B cell (primary cell): ENCODE measurements at regions of chr10 and their contacts with region 1.

Region 1: GRCh38 chr10:110803830-110804338 is 67.8 kb upstream of the PDCD4 start:
- DNase-seq: peak; percentile 71
- ATAC-seq: peak; percentile 63
- H3K4me3 ChIP-seq: peak overlapping the region in 1 of 5 experiments; percentile 28
- H3K4me3 Mint-ChIP-seq: peak overlapping the region; percentile 77
- H3K27ac ChIP-seq: peak overlapping the region in 1 of 2 donors; percentile 23
- H3K27ac Mint-ChIP-seq: peak overlapping the region; percentile 81
- H3K4me1 ChIP-seq: peaks cover 24 to 30% of the 10 kb centered on the region in 2 donors
- H3K4me1 Mint-ChIP-seq: peaks cover 30% of the 10 kb centered on the region
- H3K27me3 ChIP-seq: no peaks in the 10 kb centered on the region
- H3K27me3 Mint-ChIP-seq: peaks cover 8% of the 10 kb centered on the region
- CTCF ChIP-seq: peak; percentile 73

Region 2: DNA sequence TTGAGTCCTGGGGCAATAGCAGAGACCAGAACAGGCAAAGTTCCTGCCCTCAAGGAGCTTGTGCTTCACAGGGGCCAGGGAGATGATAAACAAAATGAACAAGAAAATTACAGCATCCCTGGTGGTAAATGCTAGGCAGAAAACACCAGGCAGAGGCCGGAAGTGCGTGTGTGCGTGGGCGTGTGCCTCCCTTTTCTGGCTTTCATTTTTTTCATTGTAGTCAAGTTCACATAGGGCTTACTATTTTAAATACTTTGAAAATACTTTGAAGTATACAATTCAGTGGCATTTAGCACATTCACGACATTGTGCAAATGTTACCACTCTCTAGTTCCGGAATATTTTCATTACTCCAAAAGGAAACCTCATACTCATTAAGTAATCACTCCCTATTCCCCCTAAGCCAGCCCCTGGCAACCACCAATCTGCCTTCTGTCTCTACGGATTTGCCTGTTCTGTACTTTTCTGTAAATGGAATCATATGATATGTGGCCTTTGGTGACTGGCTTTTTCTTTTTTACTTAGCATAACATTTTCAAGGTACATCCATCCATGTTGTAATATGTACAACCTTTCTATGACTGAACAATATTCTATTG is 20.3 kb before region 1 on chr10:
- CTCF ChIA-PET with region 1: no interaction called
- POLR2A ChIA-PET with region 1: no interaction called
- intact Hi-C with region 1: no loop called
- DNase-seq: no peak
- ATAC-seq: no peak
- H3K4me3 ChIP-seq: no peak overlapping the region
- H3K4me3 Mint-ChIP-seq: no peak overlapping the region
- H3K27ac ChIP-seq: no peak overlapping the region
- H3K27ac Mint-ChIP-seq: no peak overlapping the region
- H3K4me1 ChIP-seq: no peaks in the 10 kb centered on the region
- H3K4me1 Mint-ChIP-seq: no peaks in the 10 kb centered on the region
- H3K27me3 ChIP-seq: peaks cover 0 to 3% (median 2%) of the 10 kb centered on the region in 4 experiments
- H3K27me3 Mint-ChIP-seq: peaks cover 9% of the 10 kb centered on the region
- CTCF ChIP-seq: no peak

Region 3: GRCh38 chr10:110834629-110835301 is 30.9 kb after region 1 on chr10:
- CTCF ChIA-PET with region 1: interaction called, 13 read pairs
- POLR2A ChIA-PET with region 1: no interaction called
- intact Hi-C with region 1: no loop called
- DNase-seq: no peak
- ATAC-seq: peak; percentile 14
- H3K4me3 ChIP-seq: no peak overlapping the region
- H3K4me3 Mint-ChIP-seq: no peak overlapping the region
- H3K27ac ChIP-seq: no peak overlapping the region
- H3K27ac Mint-ChIP-seq: no peak overlapping the region
- H3K4me1 ChIP-seq: peaks cover 15 to 29% of the 10 kb centered on the region in 2 donors
- H3K4me1 Mint-ChIP-seq: peaks cover 33% of the 10 kb centered on the region
- H3K27me3 ChIP-seq: no peaks in the 10 kb centered on the region
- H3K27me3 Mint-ChIP-seq: no peaks in the 10 kb centered on the region
- CTCF ChIP-seq: no peak

Region 4: GRCh38 chr10:110857265-110858158 is 53.6 kb after region 1 on chr10:
- CTCF ChIA-PET with region 1: interaction called, 11 read pairs
- POLR2A ChIA-PET with region 1: interaction called, 4 read pairs
- intact Hi-C with region 1: no loop called
- DNase-seq: no peak
- ATAC-seq: peak; percentile 26
- H3K4me3 ChIP-seq: no peak overlapping the region
- H3K4me3 Mint-ChIP-seq: peak overlapping the region; percentile 20
- H3K27ac ChIP-seq: peak overlapping the region in 1 of 2 donors; percentile 39
- H3K27ac Mint-ChIP-seq: peak overlapping the region; percentile 33
- H3K4me1 ChIP-seq: peaks cover 61% of the 10 kb centered on the region in 2 donors
- H3K4me1 Mint-ChIP-seq: peaks cover 64% of the 10 kb centered on the region
- H3K27me3 ChIP-seq: no peaks in the 10 kb centered on the region
- H3K27me3 Mint-ChIP-seq: no peaks in the 10 kb centered on the region
- CTCF ChIP-seq: no peak

Region 5: GRCh38 chr10:110871298-110872084 is 67.6 kb after region 1 on chr10 and contains the start of gene PDCD4:
- CTCF ChIA-PET with region 1: interaction called, 93 read pairs
- POLR2A ChIA-PET with region 1: interaction called, 5 read pairs
- intact Hi-C with region 1: loop called (anchors 1 kb)
- DNase-seq: peak; percentile 92
- ATAC-seq: peak; percentile 74
- H3K4me3 ChIP-seq: peak within 1 kb of the TSS; percentile 82 to 94 (median 85)
- H3K4me3 Mint-ChIP-seq: peak within 1 kb of the TSS; percentile 91
- H3K27ac ChIP-seq: peak within 1 kb of the TSS; percentile 89 to 94
- H3K27ac Mint-ChIP-seq: peak within 1 kb of the TSS; percentile 96
- H3K4me1 ChIP-seq: peaks cover 61% of the 10 kb centered on the region in 2 donors
- H3K4me1 Mint-ChIP-seq: peaks cover 60% of the 10 kb centered on the region
- H3K27me3 ChIP-seq: no peaks in the 10 kb centered on the region
- H3K27me3 Mint-ChIP-seq: no peaks in the 10 kb centered on the region
- CTCF ChIP-seq: no peak
- total RNA-seq, gene PDCD4: 169 and 185 TPM in 2 replicates

Region 6: DNA sequence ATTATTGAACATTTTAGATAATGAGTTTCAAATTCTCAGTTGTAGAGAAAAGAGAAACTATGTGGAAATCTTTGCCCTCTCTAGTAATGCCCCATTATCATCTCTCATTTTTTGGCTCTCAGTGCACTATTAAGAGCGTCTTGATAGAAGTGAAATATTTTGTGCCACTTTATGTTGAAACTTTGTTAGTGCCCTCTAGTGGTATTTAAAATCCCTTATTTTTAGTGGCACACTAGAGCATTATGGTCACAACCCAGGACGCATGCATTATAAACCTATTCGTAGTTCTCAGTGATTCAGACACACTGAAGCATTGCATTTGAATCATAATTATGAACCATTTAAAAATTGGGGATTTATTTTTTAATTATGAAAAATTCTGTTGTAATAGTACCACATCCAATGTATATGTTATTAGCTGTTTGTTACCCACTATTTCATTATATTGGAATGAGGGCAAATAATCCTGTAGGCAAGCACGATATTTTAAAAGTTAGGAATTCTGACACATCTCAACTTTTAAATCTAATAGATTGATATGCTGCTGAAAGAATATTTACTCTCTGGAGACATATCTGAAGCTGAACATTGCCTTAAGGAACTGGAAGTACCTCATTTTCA is 89.8 kb after region 1 on chr10:
- CTCF ChIA-PET with region 1: interaction called, 169 read pairs
- POLR2A ChIA-PET with region 1: interaction called, 4 read pairs
- intact Hi-C with region 1: loop called (anchors 1 kb)
- DNase-seq: peak; percentile 74
- ATAC-seq: peak; percentile 79
- H3K4me3 ChIP-seq: no peak overlapping the region
- H3K4me3 Mint-ChIP-seq: no peak overlapping the region
- H3K27ac ChIP-seq: peak overlapping the region in 1 of 2 donors; percentile 21
- H3K27ac Mint-ChIP-seq: no peak overlapping the region
- H3K4me1 ChIP-seq: peaks cover 0 to 7% of the 10 kb centered on the region in 2 donors
- H3K4me1 Mint-ChIP-seq: peaks cover 24% of the 10 kb centered on the region
- H3K27me3 ChIP-seq: no peaks in the 10 kb centered on the region
- H3K27me3 Mint-ChIP-seq: no peaks in the 10 kb centered on the region
- CTCF ChIP-seq: peak; percentile 79

Region 7: GRCh38 chr10:110918643-110919363 is 114.9 kb after region 1 on chr10 and contains the start of gene BBIP1:
- CTCF ChIA-PET with region 1: interaction called, 15 read pairs
- POLR2A ChIA-PET with region 1: interaction called, 3 read pairs
- intact Hi-C with region 1: no loop called
- DNase-seq: peak; percentile 99
- ATAC-seq: peak; percentile 85
- H3K4me3 ChIP-seq: peak within 1 kb of the TSS; percentile 78 to 100 (median 97)
- H3K4me3 Mint-ChIP-seq: peak within 1 kb of the TSS; percentile 98
- H3K27ac ChIP-seq: peak within 1 kb of the TSS; percentile 95 to 99
- H3K27ac Mint-ChIP-seq: peak within 1 kb of the TSS; percentile 100
- H3K4me1 ChIP-seq: peaks cover 16 to 33% of the 10 kb centered on the region in 2 donors
- H3K4me1 Mint-ChIP-seq: peaks cover 49% of the 10 kb centered on the region
- H3K27me3 ChIP-seq: no peaks in the 10 kb centered on the region
- H3K27me3 Mint-ChIP-seq: no peaks in the 10 kb centered on the region
- CTCF ChIP-seq: no peak
- total RNA-seq, gene BBIP1: 35.1 and 46.1 TPM in 2 replicates

Region 8: GRCh38 chr10:110993024-110993693 is 189.3 kb after region 1 on chr10:
- CTCF ChIA-PET with region 1: no interaction called
- POLR2A ChIA-PET with region 1: no interaction called
- intact Hi-C with region 1: no loop called
- DNase-seq: no peak
- ATAC-seq: no peak
- H3K4me3 ChIP-seq: no peak overlapping the region
- H3K4me3 Mint-ChIP-seq: no peak overlapping the region
- H3K27ac ChIP-seq: no peak overlapping the region
- H3K27ac Mint-ChIP-seq: no peak overlapping the region
- H3K4me1 ChIP-seq: peaks cover 0 to 11% of the 10 kb centered on the region in 2 donors
- H3K4me1 Mint-ChIP-seq: peaks cover 31% of the 10 kb centered on the region
- H3K27me3 ChIP-seq: no peaks in the 10 kb centered on the region
- H3K27me3 Mint-ChIP-seq: no peaks in the 10 kb centered on the region
- CTCF ChIP-seq: no peak